ENCODE measurements at regions of chr3 and their contacts with region 1.

Region 1: DNA sequence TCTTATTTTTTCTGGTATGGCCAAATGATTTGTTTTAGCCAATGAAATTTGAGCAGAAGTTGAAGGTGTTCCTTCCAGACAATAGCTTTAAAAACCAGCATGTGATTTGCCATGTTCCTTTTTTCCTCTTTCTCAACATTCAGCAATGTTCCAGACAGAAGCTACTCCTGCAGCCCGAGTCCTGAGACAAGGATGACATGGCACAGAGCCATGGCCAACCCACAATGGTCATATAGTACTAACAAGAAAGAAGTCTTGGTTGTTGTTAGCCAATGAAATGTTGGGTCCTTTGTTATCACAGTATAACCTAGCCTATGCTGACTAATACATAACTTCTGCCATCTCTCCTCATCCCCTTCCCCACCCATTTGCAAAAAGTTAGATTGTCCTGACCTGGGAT is 211.1 kb upstream of the STT3B start:
- DNase-seq: no peak
- H3K4me3 ChIP-seq: no peak overlapping the region
- H3K27ac ChIP-seq: no peak overlapping the region
- H3K4me1 ChIP-seq: no peaks in the 10 kb centered on the region
- CTCF ChIP-seq: no peak

Region 2: DNA sequence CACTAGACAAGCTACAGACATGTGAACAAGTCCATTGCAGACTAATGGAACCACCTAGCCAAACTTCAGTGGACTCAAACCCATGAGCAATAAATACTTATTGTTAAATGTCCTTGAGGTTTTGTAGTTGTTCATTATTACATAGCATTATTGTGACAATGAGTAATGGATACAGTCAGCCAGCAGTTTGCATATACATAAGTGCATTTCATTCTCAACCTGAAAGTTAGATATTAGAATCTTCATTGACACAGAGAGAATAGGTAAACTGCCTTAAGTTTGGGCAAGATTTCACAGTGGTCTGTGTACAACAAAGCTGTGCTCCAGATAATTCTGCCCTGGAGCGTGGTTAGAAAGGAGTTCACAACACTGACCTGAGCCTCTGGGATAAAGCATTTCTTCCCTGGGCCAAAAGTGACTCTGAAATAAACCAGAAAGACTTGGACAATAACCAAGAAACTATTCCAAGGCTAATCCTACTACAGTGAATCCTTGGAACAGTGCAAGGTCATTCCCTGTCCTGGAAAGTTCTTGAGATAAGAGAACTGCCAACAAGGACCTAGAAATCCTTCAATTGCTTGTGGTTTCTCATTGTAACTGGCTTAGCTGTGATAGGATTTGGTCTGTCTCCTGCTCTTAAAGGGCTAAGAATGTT is 14.4 kb before region 1 on chr3:
- CTCF ChIA-PET with region 1: no interaction called
- POLR2A ChIA-PET with region 1: interaction called, 21 read pairs
- intact Hi-C with region 1: no loop called
- DNase-seq: no peak
- H3K4me3 ChIP-seq: no peak overlapping the region
- H3K27ac ChIP-seq: no peak overlapping the region
- H3K4me1 ChIP-seq: peaks cover 12% of the 10 kb centered on the region
- CTCF ChIP-seq: no peak

Region 3: DNA sequence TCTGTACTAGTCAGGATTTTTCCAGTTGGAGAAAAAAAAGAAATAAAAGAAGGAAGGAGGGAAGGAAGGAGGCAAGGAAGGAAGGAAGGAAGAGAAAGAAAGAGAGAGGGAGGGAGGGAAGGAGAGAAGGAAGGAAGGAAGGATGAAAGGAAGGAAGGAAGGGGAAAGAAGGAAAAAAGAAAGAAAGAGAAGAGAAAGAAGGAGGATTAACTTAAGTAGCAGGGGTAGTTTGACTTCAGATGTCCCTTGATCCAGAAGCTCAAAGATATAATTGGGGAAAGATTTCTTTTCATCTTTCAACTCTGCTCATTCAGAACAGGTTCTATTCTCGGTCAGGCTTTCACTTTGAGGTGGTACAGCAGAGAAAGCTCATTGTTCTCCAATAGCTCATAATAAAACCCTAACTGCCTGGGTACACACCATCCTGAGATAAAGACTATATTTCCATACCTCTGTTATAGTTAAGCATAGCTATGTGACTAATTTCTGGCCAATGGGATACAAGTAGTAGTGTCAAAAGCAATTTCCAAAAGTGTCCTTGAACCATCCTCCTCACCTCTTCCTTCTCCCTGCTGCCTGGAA is 187.6 kb after region 1 on chr3:
- CTCF ChIA-PET with region 1: no interaction called
- POLR2A ChIA-PET with region 1: no interaction called
- intact Hi-C with region 1: no loop called
- DNase-seq: no peak
- H3K4me3 ChIP-seq: no peak overlapping the region
- H3K27ac ChIP-seq: no peak overlapping the region
- H3K4me1 ChIP-seq: peaks cover 12% of the 10 kb centered on the region
- CTCF ChIP-seq: no peak